ENCODE measurements at regions of chr15 and their contacts with region 1.

Region 1: GRCh38 chr15:66841953-66842681 is 140.1 kb downstream of the SMAD6 start:
- DNase-seq: peak; percentile 95
- H3K4me3 ChIP-seq: peak overlapping the region; percentile 23 to 60 (median 54)
- H3K27ac ChIP-seq: peak overlapping the region; percentile 84 to 96 (median 94)
- H3K4me1 ChIP-seq: peaks cover 0 to 15% (median 12%) of the 10 kb centered on the region in 4 donors
- H3K27me3 ChIP-seq: no peaks in the 10 kb centered on the region
- CTCF ChIP-seq: no peak
- EP300 ChIP-seq: peak in 2 of 4 donors; percentile 11 to 37
- POLR2A ChIP-seq: no peak

Region 2: DNA sequence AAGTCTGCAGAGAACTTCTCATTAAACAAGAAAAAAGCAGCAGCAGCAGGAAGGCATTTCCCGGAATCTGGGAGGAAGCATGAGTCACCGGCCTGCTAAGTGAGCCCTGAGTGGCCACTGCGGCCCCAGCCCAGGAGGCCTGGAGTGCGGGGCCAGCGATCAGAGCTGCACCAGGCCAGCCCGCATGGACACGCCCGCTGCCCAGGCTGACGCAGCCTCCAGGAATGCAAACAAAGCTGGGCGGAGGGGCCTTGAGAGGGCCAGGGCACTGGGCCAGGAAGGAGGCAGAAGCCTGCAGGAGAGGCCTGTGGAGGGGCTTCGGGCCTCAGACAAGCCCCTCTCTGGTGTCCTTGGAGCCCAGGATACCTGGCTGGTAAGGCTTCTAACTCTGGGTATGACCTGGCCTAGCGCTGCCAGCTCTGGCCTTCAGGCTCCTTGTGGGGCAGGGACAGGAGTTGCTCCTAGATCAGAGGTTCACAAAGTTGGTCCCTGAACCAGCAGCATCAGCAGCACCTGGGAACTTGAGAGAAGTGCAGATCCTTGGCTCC is 38.9 kb before region 1 on chr15:
- intact Hi-C with region 1: loop called (anchors 5 kb)
- DNase-seq: peak; percentile 93
- H3K4me3 ChIP-seq: no peak overlapping the region
- H3K27ac ChIP-seq: peak overlapping the region; percentile 69 to 79 (median 72)
- H3K4me1 ChIP-seq: peaks cover 0 to 26% (median 25%) of the 10 kb centered on the region in 4 donors
- H3K27me3 ChIP-seq: no peaks in the 10 kb centered on the region
- CTCF ChIP-seq: no peak
- EP300 ChIP-seq: no peak
- POLR2A ChIP-seq: no peak

Measured in sigmoid colon (tissue), 7 donors.